Caco-2 (cell line): ENCODE measurements at regions of chr17 and their contacts with region 1.

Region 1: GRCh38 chr17:16521070-16521727 is 29.2 kb upstream of the LRRC75A start:
- DNase-seq: peak; percentile 86 to 89
- H3K4me3 ChIP-seq: no peak overlapping the region
- H3K4me3 Mint-ChIP-seq: no peak overlapping the region
- H3K27ac Mint-ChIP-seq: no peak overlapping the region
- H3K4me1 ChIP-seq: peaks cover 16% of the 10 kb centered on the region
- H3K4me1 Mint-ChIP-seq: peaks cover 14% of the 10 kb centered on the region
- H3K27me3 ChIP-seq: no peaks in the 10 kb centered on the region
- H3K27me3 Mint-ChIP-seq: no peaks in the 10 kb centered on the region
- CTCF ChIP-seq: peak; percentile 86

Region 2: DNA sequence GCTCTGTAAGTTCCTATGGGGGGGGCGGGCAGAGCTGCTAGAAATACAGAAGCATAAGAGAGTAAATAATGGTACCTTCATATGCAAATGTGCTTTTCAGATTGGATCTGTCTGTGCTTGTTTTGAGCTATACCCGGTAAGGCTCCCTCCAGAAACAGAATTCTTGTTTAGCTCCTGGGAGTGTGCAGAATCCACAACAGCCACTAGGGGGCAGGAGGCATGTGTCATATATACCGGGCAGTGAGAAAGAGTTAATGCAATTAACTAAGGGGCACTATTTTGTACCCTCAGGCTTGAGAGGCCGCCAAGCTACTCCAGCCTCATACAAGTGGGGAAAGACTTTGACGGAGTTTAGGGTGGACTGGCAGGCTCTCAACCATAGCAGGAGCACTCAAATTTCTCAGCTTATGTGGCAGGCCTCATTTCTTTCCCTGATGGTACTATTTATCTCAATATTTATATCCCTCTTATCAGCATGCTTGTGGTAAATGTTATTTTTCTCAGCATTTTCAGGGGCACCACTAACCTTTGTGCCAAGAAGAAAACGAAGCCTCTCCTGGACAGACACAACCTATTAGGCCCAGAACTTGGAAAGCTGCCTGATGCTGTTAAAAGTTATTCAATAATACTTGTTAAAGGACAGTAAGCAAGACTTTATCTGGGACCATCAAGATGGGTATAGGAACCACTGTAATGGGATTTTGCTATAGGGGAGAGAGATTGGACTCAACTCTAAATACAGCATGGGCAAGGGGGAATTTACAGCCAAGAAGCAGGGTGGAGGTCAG is 157.3 kb before region 1 on chr17:
- CTCF ChIA-PET with region 1: interaction called, 13 read pairs
- POLR2A ChIA-PET with region 1: no interaction called
- intact Hi-C with region 1: loop called (anchors 1 kb)
- DNase-seq: peak; percentile 75 to 76
- H3K4me3 ChIP-seq: no peak overlapping the region
- H3K4me3 Mint-ChIP-seq: no peak overlapping the region
- H3K27ac Mint-ChIP-seq: no peak overlapping the region
- H3K4me1 ChIP-seq: 0 out of 2 replicates have a peak, but pooled peaks cover 4% of the 10 kb centered on the region
- H3K4me1 Mint-ChIP-seq: no peaks in the 10 kb centered on the region
- H3K27me3 ChIP-seq: no peaks in the 10 kb centered on the region
- H3K27me3 Mint-ChIP-seq: no peaks in the 10 kb centered on the region
- CTCF ChIP-seq: peak; percentile 93 to 95

Region 3: DNA sequence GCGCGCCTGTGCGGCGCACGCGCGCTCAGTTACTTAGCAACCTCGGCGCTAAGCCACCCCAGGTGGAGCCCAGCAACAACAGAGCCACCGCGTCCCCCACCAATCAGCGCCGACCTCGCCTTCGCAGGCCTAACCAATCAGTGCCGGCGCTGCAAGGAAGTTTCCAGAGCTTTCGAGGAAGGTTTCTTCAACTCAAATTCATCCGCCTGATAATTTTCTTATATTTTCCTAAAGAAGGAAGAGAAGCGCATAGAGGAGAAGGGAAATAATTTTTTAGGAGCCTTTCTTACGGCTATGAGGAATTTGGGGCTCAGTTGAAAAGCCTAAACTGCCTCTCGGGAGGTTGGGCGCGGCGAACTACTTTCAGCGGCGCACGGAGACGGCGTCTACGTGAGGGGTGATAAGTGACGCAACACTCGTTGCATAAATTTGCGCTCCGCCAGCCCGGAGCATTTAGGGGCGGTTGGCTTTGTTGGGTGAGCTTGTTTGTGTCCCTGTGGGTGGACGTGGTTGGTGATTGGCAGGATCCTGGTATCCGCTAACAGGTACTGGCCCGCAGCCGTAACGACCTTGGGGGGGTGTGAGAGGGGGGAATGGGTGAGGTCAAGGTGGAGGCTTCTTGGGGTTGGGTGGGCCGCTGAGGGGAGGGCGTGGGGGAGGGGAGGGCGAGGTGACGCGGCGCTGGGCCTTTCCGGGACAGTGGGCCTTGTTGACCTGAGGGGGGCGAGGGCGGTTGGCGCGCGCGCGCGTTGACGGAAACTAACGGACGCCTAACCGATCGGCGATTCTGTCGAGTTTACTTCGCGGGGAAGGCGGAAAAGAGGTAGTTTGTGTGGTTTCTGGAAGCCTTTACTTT is 140.3 kb before region 1 on chr17 and contains the start of gene UBB:
- CTCF ChIA-PET with region 1: no interaction called
- POLR2A ChIA-PET with region 1: no interaction called
- intact Hi-C with region 1: loop called (anchors 1 kb)
- DNase-seq: peak; percentile 98 to 99
- H3K4me3 ChIP-seq: peak within 1 kb of the TSS; percentile 72
- H3K4me3 Mint-ChIP-seq: peak within 1 kb of the TSS; percentile 93
- H3K27ac Mint-ChIP-seq: peak within 1 kb of the TSS; percentile 100
- H3K4me1 ChIP-seq: no peaks in the 10 kb centered on the region
- H3K4me1 Mint-ChIP-seq: peaks cover 7% of the 10 kb centered on the region
- H3K27me3 ChIP-seq: no peaks in the 10 kb centered on the region
- H3K27me3 Mint-ChIP-seq: no peaks in the 10 kb centered on the region
- CTCF ChIP-seq: no peak
- total RNA-seq, gene UBB: 1,900 and 1,904 TPM in 2 replicates

Region 4: GRCh38 chr17:16428098-16428882 is 92.9 kb before region 1 on chr17:
- CTCF ChIA-PET with region 1: interaction called, 12 read pairs
- POLR2A ChIA-PET with region 1: no interaction called
- intact Hi-C with region 1: loop called (anchors 1 kb)
- DNase-seq: peak in 1 of 2 experiments; percentile 73
- H3K4me3 ChIP-seq: no peak overlapping the region
- H3K4me3 Mint-ChIP-seq: no peak overlapping the region
- H3K27ac Mint-ChIP-seq: no peak overlapping the region
- H3K4me1 ChIP-seq: no peaks in the 10 kb centered on the region
- H3K4me1 Mint-ChIP-seq: no peaks in the 10 kb centered on the region
- H3K27me3 ChIP-seq: no peaks in the 10 kb centered on the region
- H3K27me3 Mint-ChIP-seq: no peaks in the 10 kb centered on the region
- CTCF ChIP-seq: peak; percentile 74 to 84

Region 5: GRCh38 chr17:16449121-16449570 is 72.1 kb before region 1 on chr17:
- CTCF ChIA-PET with region 1: interaction called, 72 read pairs
- POLR2A ChIA-PET with region 1: interaction called, 9 read pairs
- intact Hi-C with region 1: loop called (anchors 1 kb)
- DNase-seq: no peak
- H3K4me3 ChIP-seq: no peak overlapping the region
- H3K4me3 Mint-ChIP-seq: no peak overlapping the region
- H3K27ac Mint-ChIP-seq: no peak overlapping the region
- H3K4me1 ChIP-seq: peaks cover 6% of the 10 kb centered on the region; the same call in 1 of the 2 replicates
- H3K4me1 Mint-ChIP-seq: peaks cover 8% of the 10 kb centered on the region
- H3K27me3 ChIP-seq: no peaks in the 10 kb centered on the region
- H3K27me3 Mint-ChIP-seq: no peaks in the 10 kb centered on the region
- CTCF ChIP-seq: no peak

Region 6: GRCh38 chr17:16537130-16537458 is 15.9 kb after region 1 on chr17:
- CTCF ChIA-PET with region 1: interaction called, 11 read pairs
- POLR2A ChIA-PET with region 1: interaction called, 3 read pairs
- intact Hi-C with region 1: no loop called
- DNase-seq: no peak
- H3K4me3 ChIP-seq: no peak overlapping the region
- H3K4me3 Mint-ChIP-seq: peak overlapping the region; percentile 99
- H3K27ac Mint-ChIP-seq: peak overlapping the region; percentile 32
- H3K4me1 ChIP-seq: 0 out of 2 replicates have a peak, but pooled peaks cover 8% of the 10 kb centered on the region
- H3K4me1 Mint-ChIP-seq: no peaks in the 10 kb centered on the region
- H3K27me3 ChIP-seq: no peaks in the 10 kb centered on the region
- H3K27me3 Mint-ChIP-seq: no peaks in the 10 kb centered on the region
- CTCF ChIP-seq: no peak